ENCODE measurements at regions of chr12 and their contacts with region 1.

Region 1: GRCh38 chr12:52774629-52775250 is 2.4 kb downstream of the KRT76 start:
- DNase-seq: peak; percentile 61 to 73
- H3K4me3 ChIP-seq: no peak overlapping the region
- H3K27ac ChIP-seq: no peak overlapping the region
- H3K4me1 ChIP-seq: peaks cover 6 to 9% of the 10 kb centered on the region in 2 donors
- H3K27me3 ChIP-seq: no peaks in the 10 kb centered on the region
- CTCF ChIP-seq: no peak
- POLR2A ChIP-seq: no peak

Region 2: DNA sequence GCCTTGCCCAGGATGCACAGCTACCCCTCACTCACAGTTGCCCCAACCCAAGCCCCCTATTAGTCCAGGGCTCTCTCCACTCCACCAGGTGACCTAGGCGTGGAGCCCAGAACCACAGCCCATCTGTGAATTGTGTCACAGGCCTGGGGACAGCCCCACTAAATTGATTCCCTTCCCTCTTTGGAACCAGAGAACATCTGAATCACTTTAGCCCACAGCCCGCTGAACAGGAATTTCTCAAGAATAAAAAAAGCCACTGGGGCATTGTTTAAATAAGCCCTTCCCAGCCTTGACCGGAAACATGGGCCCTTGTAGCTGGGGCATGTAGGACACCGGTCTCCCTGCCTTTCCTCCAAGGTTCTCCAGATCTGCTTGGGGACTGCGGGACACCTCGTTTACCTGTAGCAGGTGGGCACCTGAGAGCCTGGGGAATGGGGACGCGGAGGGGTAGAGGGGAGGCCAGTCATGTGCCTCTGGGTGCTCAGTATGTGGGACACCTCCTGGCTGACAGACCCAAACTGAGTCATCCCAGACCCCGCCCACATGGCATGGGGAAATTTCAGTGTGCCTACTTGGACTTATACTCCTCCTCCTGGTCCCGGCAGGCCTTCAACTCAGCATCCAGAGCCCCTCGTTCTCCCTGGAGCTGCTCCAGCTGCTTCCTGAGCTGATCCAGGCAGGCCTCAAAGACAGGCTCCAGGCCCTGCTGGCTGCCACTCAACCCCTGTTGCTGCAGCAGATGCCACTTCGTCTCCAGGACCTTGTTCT is 72.8 kb after region 1 on chr12:
- intact Hi-C with region 1: loop called (anchors 10 kb)
- DNase-seq: peak; percentile 54 to 60
- H3K4me3 ChIP-seq: no peak overlapping the region
- H3K27ac ChIP-seq: peak overlapping the region in 2 of 3 donors; percentile 9 to 22
- H3K4me1 ChIP-seq: peaks cover 13 to 25% of the 10 kb centered on the region in 2 donors
- H3K27me3 ChIP-seq: no peaks in the 10 kb centered on the region
- CTCF ChIP-seq: no peak
- POLR2A ChIP-seq: no peak

Measured in thyroid gland (tissue), 4 donors.